Transverse colon (tissue), 4 donors: ENCODE measurements at regions of chr2 and their contacts with region 1.

Region 1: GRCh38 chr2:70616168-70616694 is 62.6 kb upstream of the TGFA start:
- DNase-seq: peak; percentile 52
- H3K4me3 ChIP-seq: no peak overlapping the region
- H3K27ac ChIP-seq: no peak overlapping the region
- H3K4me1 ChIP-seq: peaks cover 0 to 3% (median 0%) of the 10 kb centered on the region in 4 donors
- H3K27me3 ChIP-seq: no peaks in the 10 kb centered on the region
- CTCF ChIP-seq: no peak
- EP300 ChIP-seq: no peak
- POLR2A ChIP-seq: no peak

Region 2: DNA sequence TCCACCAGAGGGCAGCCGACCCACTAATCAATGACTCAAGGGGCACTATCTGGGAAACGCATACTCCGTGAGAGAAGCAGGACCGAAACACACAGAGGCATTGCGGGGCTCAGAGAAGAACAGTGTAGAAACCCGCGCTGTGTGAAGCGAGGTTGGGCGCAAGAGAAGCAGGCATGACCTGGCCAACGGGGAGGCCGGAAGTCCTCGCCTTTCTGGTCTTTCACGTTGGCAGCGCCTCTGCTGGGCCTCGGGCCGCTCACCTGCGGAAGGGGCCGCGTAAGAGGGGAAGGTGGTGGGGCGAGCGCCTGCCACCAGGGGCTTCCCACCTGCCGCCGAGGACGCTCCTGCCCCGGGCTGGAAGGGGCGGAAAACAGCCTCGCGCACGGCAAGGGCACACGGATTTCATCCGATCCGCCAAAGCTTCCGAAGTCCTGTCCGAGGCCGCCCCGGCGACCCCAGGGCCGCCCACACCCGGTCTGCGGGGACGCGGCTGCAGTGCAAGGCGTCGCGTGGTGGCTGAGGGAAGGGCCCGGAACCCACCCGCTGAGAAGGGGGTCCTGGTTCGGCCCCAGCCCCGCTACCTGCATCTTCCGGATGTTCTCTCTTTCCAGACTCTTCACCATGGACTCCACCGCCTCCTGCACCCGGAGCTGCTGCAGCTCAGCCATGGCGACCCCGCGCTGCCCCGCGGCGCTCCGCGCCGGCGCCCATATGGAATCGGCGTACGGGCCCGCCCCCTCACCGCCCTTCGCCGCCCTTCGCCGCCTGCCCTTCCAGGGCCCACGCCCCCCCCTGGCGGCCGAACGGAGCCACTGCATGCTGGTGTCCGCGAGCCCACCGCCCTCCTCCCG is 314.7 kb before region 1 on chr2 and contains the start of gene FAM136A:
- in situ Hi-C with region 1: loop called in 1 of 4 experiments (anchors 10 kb)
- intact Hi-C with region 1: no loop called
- DNase-seq: peak; percentile 91
- H3K4me3 ChIP-seq: peak within 1 kb of the TSS; percentile 60 to 94 (median 82)
- H3K27ac ChIP-seq: peak within 1 kb of the TSS; percentile 86 to 93 (median 90)
- H3K4me1 ChIP-seq: peaks cover 4 to 13% (median 8%) of the 10 kb centered on the region in 4 donors
- H3K27me3 ChIP-seq: no peaks in the 10 kb centered on the region
- CTCF ChIP-seq: peak; percentile 83 to 99 (median 97)
- EP300 ChIP-seq: no peak
- POLR2A ChIP-seq: peak; percentile 55
- total RNA-seq, gene FAM136A: 10.7 to 45.1 (median 31.0) TPM

Region 3: GRCh38 chr2:70340921-70341765 is 275.1 kb before region 1 on chr2:
- in situ Hi-C with region 1: loop called in 2 of 4 experiments (anchors 10 kb)
- intact Hi-C with region 1: loop called (anchors 5 kb)
- DNase-seq: peak; percentile 35
- H3K4me3 ChIP-seq: no peak overlapping the region
- H3K27ac ChIP-seq: no peak overlapping the region
- H3K4me1 ChIP-seq: no peaks in the 10 kb centered on the region
- H3K27me3 ChIP-seq: no peaks in the 10 kb centered on the region
- CTCF ChIP-seq: peak; percentile 66 to 90 (median 76)
- EP300 ChIP-seq: no peak
- POLR2A ChIP-seq: no peak

Region 4: GRCh38 chr2:70553584-70554337 is 62.5 kb before region 1 on chr2 and contains the start of gene TGFA:
- in situ Hi-C with region 1: loop called in 1 of 4 experiments (anchors 10 kb)
- intact Hi-C with region 1: no loop called
- DNase-seq: peak; percentile 89
- H3K4me3 ChIP-seq: peak within 1 kb of the TSS; percentile 56 to 80 (median 64)
- H3K27ac ChIP-seq: peak within 1 kb of the TSS; percentile 84 to 93 (median 87)
- H3K4me1 ChIP-seq: peaks cover 0 to 47% (median 28%) of the 10 kb centered on the region in 4 donors
- H3K27me3 ChIP-seq: peaks cover 31% of the 10 kb centered on the region
- CTCF ChIP-seq: peak; percentile 76 to 90 (median 78)
- EP300 ChIP-seq: no peak
- POLR2A ChIP-seq: peak; percentile 87
- total RNA-seq, gene TGFA: 10.7 to 51.3 (median 33.7) TPM